ENCODE measurements at regions of chr15 and their contacts with region 1.

Region 1: DNA sequence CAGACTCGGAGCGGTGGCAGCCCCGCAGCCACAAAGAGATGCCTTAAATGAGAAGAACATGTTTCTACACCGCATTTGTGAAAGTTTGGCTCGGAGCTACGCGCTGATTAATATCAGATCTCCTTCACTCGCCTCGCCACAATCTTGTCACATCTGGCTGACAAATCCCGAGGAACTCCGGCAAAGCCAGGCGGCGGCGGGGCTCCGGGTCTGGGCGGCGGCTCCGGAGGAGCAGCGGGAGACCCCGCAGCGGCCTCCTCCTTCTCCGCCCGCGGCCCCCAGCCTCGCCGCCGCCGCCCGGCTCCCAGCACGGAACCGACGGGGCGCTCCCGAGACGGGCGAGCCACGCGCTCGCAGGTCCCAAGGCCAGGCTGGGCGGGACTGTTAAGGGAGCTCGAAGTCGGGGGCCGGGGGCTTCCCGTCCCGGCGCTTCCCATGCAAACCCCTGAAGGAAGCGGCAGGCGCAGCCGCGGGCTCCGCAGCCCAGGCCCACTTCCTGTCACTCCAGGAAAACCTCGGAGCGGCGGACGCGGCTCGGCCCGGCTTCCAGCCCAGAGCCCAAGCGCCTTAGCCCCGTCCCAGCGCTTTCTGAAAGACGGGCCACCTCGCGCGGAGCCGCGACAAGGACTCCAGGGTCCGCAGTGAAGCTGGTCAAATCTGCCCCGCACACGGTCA is 1.2 kb downstream of the BNC1 start:
- DNase-seq: no peak
- H3K4me3 ChIP-seq: peak overlapping the region; percentile 62 to 95 (median 63)
- H3K27ac ChIP-seq: peak overlapping the region; percentile 94
- H3K4me1 ChIP-seq: peaks cover 60% of the 10 kb centered on the region
- H3K27me3 ChIP-seq: no peaks in the 10 kb centered on the region
- CTCF ChIP-seq: no peak

Region 2: GRCh38 chr15:81880314-81880713 is 1403.0 kb before region 1 on chr15:
- CTCF ChIA-PET with region 1: no interaction called
- dilution Hi-C with region 1: no loop called
- in situ Hi-C with region 1: no loop called
- intact Hi-C with region 1: no loop called
- DNase-seq: no peak
- H3K4me3 ChIP-seq: no peak overlapping the region
- H3K27ac ChIP-seq: no peak overlapping the region
- H3K4me1 ChIP-seq: peaks cover 7% of the 10 kb centered on the region
- H3K27me3 ChIP-seq: no peaks in the 10 kb centered on the region
- CTCF ChIP-seq: no peak

Region 3: DNA sequence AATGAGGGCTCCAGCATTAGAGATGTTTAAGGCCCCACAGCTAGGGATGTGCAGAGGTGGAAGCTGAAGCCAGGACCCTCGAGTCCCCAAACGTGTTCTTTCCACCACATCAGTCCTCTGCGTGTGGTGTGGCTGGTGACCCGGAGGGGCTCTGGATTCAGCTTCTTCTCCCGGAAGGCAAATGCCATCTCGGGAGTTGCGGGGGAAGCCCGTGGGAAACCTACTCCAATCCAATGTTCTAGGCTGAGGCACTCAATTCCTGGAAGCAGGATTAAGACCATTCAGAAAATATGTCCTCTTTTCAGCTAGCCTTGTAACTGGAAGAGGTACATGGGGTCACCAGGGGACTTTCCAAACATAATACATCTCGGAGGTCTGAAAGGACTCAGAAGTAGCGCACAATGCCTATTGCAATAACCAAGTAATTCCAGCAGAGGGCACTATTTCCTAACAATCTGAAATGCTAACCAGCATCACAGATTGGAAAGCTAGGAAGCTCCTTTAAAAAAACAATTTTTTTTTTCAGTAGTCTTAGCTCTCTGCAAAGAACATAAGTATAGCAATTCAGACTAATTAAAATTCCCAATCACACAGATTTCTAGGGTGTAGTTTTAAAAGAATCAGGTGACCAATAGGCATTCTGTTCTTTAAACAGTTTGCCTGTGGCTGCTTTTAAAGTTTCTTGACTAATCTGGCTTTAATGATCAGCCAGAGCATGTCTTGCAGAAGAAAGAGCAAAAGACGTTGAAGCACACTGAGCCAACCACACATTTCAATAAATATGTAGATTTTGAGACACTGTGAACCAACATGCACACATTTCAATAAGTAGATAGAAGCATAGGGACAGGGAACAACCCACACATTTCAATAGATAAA is 34.9 kb before region 1 on chr15:
- CTCF ChIA-PET with region 1: interaction called, 3 read pairs
- dilution Hi-C with region 1: no loop called
- in situ Hi-C with region 1: no loop called
- intact Hi-C with region 1: loop called (anchors 2 kb)
- DNase-seq: peak; percentile 62
- H3K4me3 ChIP-seq: no peak overlapping the region
- H3K27ac ChIP-seq: no peak overlapping the region
- H3K4me1 ChIP-seq: no peaks in the 10 kb centered on the region
- H3K27me3 ChIP-seq: no peaks in the 10 kb centered on the region
- CTCF ChIP-seq: peak; percentile 81 to 87

Region 4: DNA sequence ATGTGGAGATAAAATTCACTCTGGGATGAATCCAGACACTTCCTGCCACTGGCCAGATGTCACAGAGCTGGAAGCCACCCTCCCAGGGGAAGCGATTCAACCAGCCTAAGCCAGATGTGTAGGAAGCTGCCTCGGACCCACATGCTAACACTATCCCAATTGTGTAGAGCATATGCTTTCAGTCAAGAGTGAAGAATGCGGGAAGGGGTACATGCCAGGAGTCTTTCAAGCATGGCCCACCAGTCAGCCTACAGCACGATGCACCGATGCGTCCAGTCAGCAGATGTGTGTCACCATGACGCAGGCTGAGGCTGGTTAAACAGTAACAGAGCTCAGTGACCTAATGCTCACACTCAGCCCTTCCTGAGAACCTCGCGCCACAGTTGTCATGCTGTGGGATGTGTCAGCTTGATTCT is 40.0 kb after region 1 on chr15:
- CTCF ChIA-PET with region 1: interaction called, 3 read pairs
- dilution Hi-C with region 1: no loop called
- in situ Hi-C with region 1: no loop called
- intact Hi-C with region 1: loop called (anchors 1 kb)
- DNase-seq: peak; percentile 60
- H3K4me3 ChIP-seq: no peak overlapping the region
- H3K27ac ChIP-seq: peak overlapping the region; percentile 50
- H3K4me1 ChIP-seq: peaks cover 52% of the 10 kb centered on the region
- H3K27me3 ChIP-seq: no peaks in the 10 kb centered on the region
- CTCF ChIP-seq: no peak

Region 5: GRCh38 chr15:83340087-83340486 is 56.8 kb after region 1 on chr15:
- CTCF ChIA-PET with region 1: no interaction called
- dilution Hi-C with region 1: no loop called
- in situ Hi-C with region 1: no loop called
- intact Hi-C with region 1: no loop called
- DNase-seq: no peak
- H3K4me3 ChIP-seq: no peak overlapping the region
- H3K27ac ChIP-seq: no peak overlapping the region
- H3K4me1 ChIP-seq: no peaks in the 10 kb centered on the region
- H3K27me3 ChIP-seq: no peaks in the 10 kb centered on the region
- CTCF ChIP-seq: no peak

Region 6: DNA sequence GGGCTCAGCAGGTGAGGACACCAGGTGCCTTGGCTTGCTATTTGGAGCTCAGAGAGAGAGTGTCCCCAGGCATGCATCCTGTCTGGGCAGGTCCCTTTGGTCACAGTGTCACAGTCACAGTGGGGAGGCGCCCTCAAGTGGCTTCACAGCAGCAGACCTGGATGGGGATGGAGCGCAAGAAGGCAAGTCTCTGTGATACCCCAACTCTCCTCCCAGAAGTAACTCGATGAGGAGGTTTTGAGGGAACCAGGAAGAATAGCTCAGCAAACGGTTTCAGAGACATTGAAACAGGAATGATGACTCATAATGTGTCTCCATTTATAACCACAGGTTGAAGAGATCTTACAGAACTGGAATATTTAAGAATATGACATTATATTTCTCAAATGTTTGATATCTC is 97.4 kb after region 1 on chr15:
- CTCF ChIA-PET with region 1: no interaction called
- dilution Hi-C with region 1: no loop called
- in situ Hi-C with region 1: loop called (anchors 10 kb)
- intact Hi-C with region 1: loop called (anchors 1 kb)
- DNase-seq: peak; percentile 84
- H3K4me3 ChIP-seq: no peak overlapping the region
- H3K27ac ChIP-seq: peak overlapping the region; percentile 97
- H3K4me1 ChIP-seq: peaks cover 45% of the 10 kb centered on the region
- H3K27me3 ChIP-seq: no peaks in the 10 kb centered on the region
- CTCF ChIP-seq: peak; percentile 43 to 75

Measured in mammary epithelial cell (primary cell).